Mammary epithelial cell (primary cell): ENCODE measurements at regions of chrX and their contacts with region 1.

Region 1: GRCh38 chrX:74421036-74421739 is at the start of gene SLC16A2:
- DNase-seq: peak; percentile 64
- H3K4me3 ChIP-seq: peak within 1 kb of the TSS; percentile 52 to 63 (median 63)
- H3K27ac ChIP-seq: peak within 1 kb of the TSS; percentile 18
- H3K4me1 ChIP-seq: no peaks in the 10 kb centered on the region
- H3K27me3 ChIP-seq: no peaks in the 10 kb centered on the region
- CTCF ChIP-seq: no peak
- total RNA-seq, gene SLC16A2: 16.2 to 45.4 TPM

Region 2: GRCh38 chrX:74232859-74233258 is 188.3 kb before region 1 on chrX:
- CTCF ChIA-PET with region 1: no interaction called
- dilution Hi-C with region 1: no loop called
- in situ Hi-C with region 1: no loop called
- intact Hi-C with region 1: no loop called
- DNase-seq: peak; percentile 24
- H3K4me3 ChIP-seq: no peak overlapping the region
- H3K27ac ChIP-seq: no peak overlapping the region
- H3K4me1 ChIP-seq: no peaks in the 10 kb centered on the region
- H3K27me3 ChIP-seq: no peaks in the 10 kb centered on the region
- CTCF ChIP-seq: peak in 1 of 2 donors; percentile 25

Region 3: DNA sequence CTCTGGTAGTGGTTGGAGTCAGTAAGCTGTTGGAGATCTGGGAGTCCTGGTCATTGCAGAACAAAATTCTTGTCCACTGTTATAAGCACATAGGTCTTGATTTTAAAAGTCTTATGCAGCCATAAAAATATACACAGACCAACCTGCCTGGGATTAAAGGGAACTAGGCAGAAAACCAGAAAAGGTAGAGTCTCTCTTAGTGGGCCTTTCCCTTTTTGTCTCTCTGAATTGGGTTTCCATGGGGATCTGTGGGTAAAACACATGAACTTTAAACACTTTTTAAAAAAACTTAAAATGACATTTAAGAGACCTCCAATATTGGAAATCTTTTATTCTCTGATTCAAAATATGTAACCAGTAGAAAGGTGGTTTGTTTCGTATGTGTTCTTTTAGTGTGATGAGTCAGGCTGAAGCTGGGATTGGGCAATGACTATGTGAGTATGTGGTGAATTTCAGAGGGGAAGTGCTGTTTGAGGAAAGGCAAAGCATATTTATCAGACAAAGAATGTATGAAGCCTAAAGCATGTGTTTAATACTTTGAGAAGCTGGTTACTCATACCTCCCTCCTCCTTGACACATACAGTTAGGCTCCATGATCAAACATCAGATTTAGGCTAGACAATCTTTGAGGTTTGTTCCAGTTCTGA is 29.7 kb after region 1 on chrX:
- CTCF ChIA-PET with region 1: no interaction called
- dilution Hi-C with region 1: no loop called
- in situ Hi-C with region 1: no loop called
- intact Hi-C with region 1: loop called (anchors 1 kb)
- DNase-seq: peak; percentile 90
- H3K4me3 ChIP-seq: no peak overlapping the region
- H3K27ac ChIP-seq: peak overlapping the region; percentile 84
- H3K4me1 ChIP-seq: peaks cover 51% of the 10 kb centered on the region
- H3K27me3 ChIP-seq: no peaks in the 10 kb centered on the region
- CTCF ChIP-seq: no peak

Region 4: GRCh38 chrX:74458735-74459134 is 37.5 kb after region 1 on chrX:
- CTCF ChIA-PET with region 1: no interaction called
- dilution Hi-C with region 1: no loop called
- in situ Hi-C with region 1: no loop called
- intact Hi-C with region 1: loop called (anchors 1 kb)
- DNase-seq: peak; percentile 67
- H3K4me3 ChIP-seq: no peak overlapping the region
- H3K27ac ChIP-seq: no peak overlapping the region
- H3K4me1 ChIP-seq: peaks cover 4% of the 10 kb centered on the region
- H3K27me3 ChIP-seq: no peaks in the 10 kb centered on the region
- CTCF ChIP-seq: peak; percentile 13 to 21

Region 5: DNA sequence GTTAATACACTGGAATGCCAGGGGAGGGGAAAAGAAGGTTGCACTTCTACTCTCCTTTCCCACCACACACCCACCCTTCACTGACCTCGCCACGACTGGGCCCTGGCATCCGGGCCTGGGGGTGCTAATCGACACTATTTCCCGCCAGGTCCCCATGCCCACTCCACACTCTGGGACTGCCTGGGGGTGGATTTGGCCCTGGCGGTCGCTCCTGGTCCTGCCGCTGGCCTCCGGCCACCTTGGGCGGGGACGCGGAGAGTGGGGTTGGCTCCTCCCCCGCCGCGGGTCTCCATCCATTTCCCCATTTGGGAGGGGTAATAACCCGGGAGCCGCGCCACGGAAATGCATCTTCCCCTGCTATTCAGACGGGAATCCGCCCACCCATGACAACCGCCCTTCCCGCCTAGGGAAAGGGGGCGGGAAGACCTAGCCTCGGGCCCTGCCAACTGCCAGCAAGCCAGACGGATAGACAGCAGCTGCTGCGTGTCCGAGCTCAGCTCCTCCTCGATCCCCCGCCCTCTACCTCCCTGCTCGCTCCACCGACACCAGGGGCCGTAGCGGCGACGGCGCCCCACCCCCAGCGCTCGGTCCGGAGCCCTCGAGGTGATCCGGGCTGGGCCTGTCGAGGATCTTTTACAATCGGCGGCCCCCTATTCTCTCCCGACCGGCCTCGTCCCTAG is 115.1 kb after region 1 on chrX:
- CTCF ChIA-PET with region 1: no interaction called
- dilution Hi-C with region 1: no loop called
- in situ Hi-C with region 1: no loop called
- intact Hi-C with region 1: loop called (anchors 2 kb)
- DNase-seq: peak; percentile 47
- H3K4me3 ChIP-seq: peak overlapping the region; percentile 27 to 42 (median 37)
- H3K27ac ChIP-seq: no peak overlapping the region
- H3K4me1 ChIP-seq: peaks cover 23% of the 10 kb centered on the region
- H3K27me3 ChIP-seq: no peaks in the 10 kb centered on the region
- CTCF ChIP-seq: peak; percentile 2 to 25